Activated naive CD4-positive, alpha-beta T cell treated with anti-CD3 and anti-CD28 coated beads for 36 hours (primary cell): ENCODE measurements at regions of chr3 and their contacts with region 1.

Region 1: GRCh38 chr3:120095226-120095978 is 1.2 kb upstream of the GSK3B start:
- DNase-seq: peak; percentile 92
- H3K4me3 Mint-ChIP-seq: no peak overlapping the region
- H3K27ac Mint-ChIP-seq: no peak overlapping the region
- H3K4me1 Mint-ChIP-seq: peaks cover 18% of the 10 kb centered on the region
- H3K27me3 Mint-ChIP-seq: no peaks in the 10 kb centered on the region

Region 2: DNA sequence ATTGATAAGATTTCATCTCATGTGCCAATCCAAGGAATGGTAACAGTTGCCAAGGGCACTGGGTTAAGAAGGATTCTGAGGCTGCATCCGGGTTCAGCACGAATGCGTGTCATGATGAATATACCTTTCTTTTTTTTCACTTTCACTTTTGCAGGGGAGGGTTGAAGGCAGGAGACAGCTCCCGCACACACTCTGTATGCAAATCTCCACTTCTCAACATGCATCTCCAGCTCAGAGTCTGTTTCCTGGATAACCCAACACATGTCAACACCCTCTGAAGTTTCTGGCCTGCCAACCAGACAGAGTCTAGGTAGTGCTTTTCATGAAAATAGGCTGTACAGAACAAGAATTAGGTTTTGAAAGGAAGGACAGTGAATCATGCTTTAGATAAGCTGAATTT is 876.3 kb before region 1 on chr3:
- CTCF ChIA-PET with region 1: no interaction called
- intact Hi-C with region 1: loop called (anchors 5 kb)
- DNase-seq: peak; percentile 78
- H3K4me3 Mint-ChIP-seq: peak overlapping the region; percentile 63
- H3K27ac Mint-ChIP-seq: peak overlapping the region; percentile 94
- H3K4me1 Mint-ChIP-seq: peaks cover 74% of the 10 kb centered on the region
- H3K27me3 Mint-ChIP-seq: no peaks in the 10 kb centered on the region

Region 3: GRCh38 chr3:119463171-119464169 is 631.9 kb before region 1 on chr3 and contains the start of gene TMEM39A:
- CTCF ChIA-PET with region 1: no interaction called
- intact Hi-C with region 1: loop called (anchors 1 kb)
- DNase-seq: peak; percentile 98
- H3K4me3 Mint-ChIP-seq: peak within 1 kb of the TSS; percentile 96
- H3K27ac Mint-ChIP-seq: peak within 1 kb of the TSS; percentile 90
- H3K4me1 Mint-ChIP-seq: peaks cover 32% of the 10 kb centered on the region
- H3K27me3 Mint-ChIP-seq: no peaks in the 10 kb centered on the region
- total RNA-seq, gene TMEM39A: 21.4 to 26.9 TPM

Region 4: DNA sequence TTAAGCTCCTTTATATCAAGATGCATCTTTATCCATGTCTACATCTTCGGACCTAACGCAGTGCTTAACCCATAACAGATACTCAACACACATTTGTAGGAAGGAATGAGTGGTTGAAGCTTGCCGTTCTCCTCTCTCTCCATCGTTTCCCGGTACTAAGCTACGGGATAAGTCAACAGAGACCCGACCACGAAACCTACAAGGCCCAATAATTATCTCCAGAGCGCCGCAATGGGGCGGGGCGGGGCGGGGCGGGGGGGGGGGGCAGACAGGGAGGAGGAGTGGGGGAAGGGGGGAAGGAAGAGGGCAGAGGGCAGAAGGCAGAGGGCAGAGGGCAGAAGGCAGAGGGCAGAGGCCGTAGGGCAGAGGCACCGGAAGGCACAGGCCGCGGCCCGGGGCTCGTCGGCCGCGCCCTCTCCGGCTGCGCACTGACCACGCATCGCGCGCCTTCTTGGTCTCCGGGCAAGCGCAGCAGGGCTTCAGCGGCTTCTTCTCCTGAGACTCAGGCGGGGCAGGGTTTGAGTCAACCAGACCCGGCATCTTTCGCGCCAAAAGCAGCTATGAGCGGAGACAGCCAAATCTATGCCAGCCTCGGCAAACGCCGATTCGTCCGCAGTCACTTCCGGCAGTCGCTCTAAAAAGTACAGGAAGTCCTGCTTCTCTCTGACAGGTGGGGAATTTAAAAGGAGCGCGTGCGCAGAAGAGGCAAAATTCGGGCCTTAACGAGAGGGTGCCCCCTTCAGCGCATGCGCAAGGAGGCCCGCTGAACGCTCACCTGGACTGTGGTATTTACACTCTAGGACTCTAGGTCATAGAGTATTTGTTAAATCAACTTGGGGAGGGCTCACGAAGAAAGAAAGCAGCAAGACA is 418.4 kb before region 1 on chr3 and contains the start of gene COX17:
- CTCF ChIA-PET with region 1: no interaction called
- intact Hi-C with region 1: loop called (anchors 1 kb)
- DNase-seq: peak; percentile 97
- H3K4me3 Mint-ChIP-seq: peak within 1 kb of the TSS; percentile 82
- H3K27ac Mint-ChIP-seq: peak within 1 kb of the TSS; percentile 95
- H3K4me1 Mint-ChIP-seq: peaks cover 31% of the 10 kb centered on the region
- H3K27me3 Mint-ChIP-seq: no peaks in the 10 kb centered on the region
- total RNA-seq, gene COX17: 104 to 113 TPM

Region 5: DNA sequence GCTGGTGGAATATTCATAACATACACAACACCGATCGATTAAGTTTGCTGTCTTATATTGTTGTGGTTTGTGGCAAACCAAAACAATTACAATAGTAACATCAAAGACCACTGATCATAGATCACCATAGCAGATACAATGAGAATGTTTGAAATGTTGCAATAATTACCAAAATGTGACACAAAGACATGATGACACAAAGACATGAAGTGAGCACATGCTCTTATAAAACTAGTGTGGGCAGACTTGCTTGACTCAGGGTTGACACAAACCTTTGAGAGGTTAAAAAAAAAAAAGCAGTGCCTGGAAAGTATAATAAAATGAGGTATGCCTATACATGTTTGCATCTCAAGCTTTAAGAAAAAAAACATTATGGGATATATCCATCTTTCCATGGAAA is 183.2 kb before region 1 on chr3:
- CTCF ChIA-PET with region 1: no interaction called
- intact Hi-C with region 1: loop called (anchors 1 kb)
- DNase-seq: no peak
- H3K4me3 Mint-ChIP-seq: no peak overlapping the region
- H3K27ac Mint-ChIP-seq: peak overlapping the region; percentile 77
- H3K4me1 Mint-ChIP-seq: peaks cover 33% of the 10 kb centered on the region
- H3K27me3 Mint-ChIP-seq: no peaks in the 10 kb centered on the region

Region 6: GRCh38 chr3:120348981-120349818 is 253.8 kb after region 1 on chr3 and contains the start of gene LRRC58:
- CTCF ChIA-PET with region 1: no interaction called
- intact Hi-C with region 1: loop called (anchors 1 kb)
- DNase-seq: peak; percentile 85
- H3K4me3 Mint-ChIP-seq: peak within 1 kb of the TSS; percentile 89
- H3K27ac Mint-ChIP-seq: peak within 1 kb of the TSS; percentile 89
- H3K4me1 Mint-ChIP-seq: peaks cover 40% of the 10 kb centered on the region
- H3K27me3 Mint-ChIP-seq: no peaks in the 10 kb centered on the region
- total RNA-seq, gene LRRC58: 17.6 to 18.0 TPM

Region 7: DNA sequence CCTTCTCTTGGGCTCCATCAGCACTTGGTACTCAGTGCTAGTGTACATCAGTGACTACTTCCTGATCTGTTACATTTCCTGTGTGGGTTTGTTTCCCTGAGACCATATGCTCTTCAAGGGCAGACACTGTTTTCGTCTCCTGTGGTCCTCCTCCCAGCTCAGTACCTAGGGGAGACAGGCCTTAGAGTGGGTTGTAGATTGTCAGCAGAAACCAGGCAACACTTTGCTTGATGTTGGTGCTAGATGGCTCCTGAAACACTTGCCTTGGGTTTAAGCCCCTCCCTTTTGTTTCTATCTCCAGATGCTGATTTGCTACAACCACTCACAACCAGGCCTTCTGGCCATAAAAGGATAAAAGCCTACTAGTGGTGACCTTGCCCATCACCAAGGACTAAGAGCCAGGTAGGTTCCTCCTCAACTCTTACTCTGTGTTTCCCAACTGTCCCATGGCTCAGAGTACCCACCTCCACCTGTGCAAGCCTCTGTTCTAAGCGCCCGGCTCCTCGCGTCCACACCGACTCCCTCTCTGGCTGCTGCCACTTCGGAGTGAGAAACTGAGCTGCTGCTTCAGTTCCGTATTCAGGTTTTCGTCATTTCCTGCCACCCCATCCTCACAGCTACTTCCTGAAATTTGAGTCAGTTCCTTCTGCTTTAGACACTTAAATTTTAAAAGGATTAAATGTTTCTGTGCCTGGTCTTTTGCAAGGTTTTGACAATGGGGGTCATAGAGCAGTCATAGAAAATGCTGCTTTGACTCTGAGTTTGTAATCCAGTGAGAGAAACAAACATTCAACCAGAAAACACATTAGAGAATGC is 1565.2 kb after region 1 on chr3 and contains the start of gene HCLS1:
- CTCF ChIA-PET with region 1: no interaction called
- intact Hi-C with region 1: loop called (anchors 10 kb)
- DNase-seq: peak; percentile 82
- H3K4me3 Mint-ChIP-seq: peak within 1 kb of the TSS; percentile 99
- H3K27ac Mint-ChIP-seq: peak within 1 kb of the TSS; percentile 100
- H3K4me1 Mint-ChIP-seq: peaks cover 53% of the 10 kb centered on the region
- H3K27me3 Mint-ChIP-seq: no peaks in the 10 kb centered on the region
- total RNA-seq, gene HCLS1: 240 to 248 TPM